ENCODE measurements at regions of chr2 and their contacts with region 1.

Region 1: GRCh38 chr2:239024226-239024625 is 176.3 kb downstream of the TWIST2 start:
- DNase-seq: peak; percentile 45

Region 2: DNA sequence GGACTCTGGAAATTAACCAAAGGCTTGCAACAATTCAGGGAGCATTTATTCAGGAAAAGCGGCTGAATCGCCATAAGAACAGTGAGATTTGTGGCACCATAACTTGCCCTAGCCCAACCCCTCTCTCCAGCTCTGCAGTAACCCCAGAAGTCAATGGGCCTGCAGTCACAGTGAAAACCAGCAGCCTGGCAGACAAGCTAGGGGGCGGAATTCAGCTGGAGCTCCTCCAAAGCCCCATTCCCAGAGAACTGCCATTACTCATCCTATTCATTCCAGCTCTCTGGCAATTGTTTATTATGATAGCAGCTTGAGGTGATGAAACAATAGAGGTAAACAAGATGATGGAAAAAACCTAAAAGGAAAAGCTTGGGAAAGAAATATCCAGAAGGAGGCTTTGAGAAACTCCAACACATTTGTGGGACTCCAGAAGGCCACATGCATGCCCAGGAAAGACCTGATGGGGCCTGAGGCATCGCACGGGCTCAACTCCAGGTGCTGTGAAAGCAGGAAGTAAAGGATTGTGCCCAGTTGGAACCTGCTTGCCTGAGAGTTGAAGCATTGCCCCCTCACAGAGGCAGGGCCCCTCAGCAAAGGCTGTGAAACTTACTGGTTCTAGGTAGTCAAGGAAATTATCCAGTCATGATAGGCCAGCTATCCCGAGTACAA is 49.6 kb before region 1 on chr2:
- intact Hi-C with region 1: no loop called
- DNase-seq: no peak

Region 3: DNA sequence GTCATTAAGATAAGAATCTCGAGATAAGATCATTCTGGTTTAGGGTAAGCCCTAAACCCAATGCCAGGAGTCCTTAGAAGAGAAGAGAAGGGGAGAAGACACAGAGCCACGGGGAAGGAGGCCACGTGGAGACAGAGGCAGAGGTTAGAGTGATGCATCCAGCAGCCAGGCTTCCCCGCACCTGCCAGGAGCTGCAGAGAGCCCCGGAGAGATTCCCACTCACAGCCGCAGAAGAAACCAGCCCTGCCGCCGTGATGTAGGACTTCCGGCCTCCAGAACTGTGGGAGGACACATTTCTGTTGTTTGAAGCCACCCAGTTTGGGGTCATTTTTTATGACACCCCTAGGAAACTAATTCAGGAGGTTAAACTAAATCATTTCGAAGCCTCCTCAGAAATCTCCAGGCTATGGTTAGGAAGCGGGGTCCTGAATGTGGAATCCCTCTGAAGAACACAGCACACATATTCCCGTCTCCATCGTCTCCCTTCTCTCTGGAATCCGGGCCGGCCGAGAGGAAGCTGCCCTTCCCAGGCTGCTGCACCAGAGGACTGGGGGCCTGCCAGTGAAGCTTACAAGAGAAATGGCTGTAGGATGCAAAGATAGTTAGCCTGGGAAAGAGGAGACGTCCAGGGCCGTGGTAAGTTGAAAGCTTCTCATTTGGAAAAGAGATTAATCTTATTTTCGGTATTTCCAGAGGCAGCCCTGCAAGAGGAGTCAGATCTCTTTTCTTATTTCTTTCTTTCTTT is 19.8 kb before region 1 on chr2:
- intact Hi-C with region 1: loop called in 1 of 2 experiments (anchors 1 kb)
- DNase-seq: no peak

Region 4: GRCh38 chr2:239106314-239106908 is 82.2 kb after region 1 on chr2:
- intact Hi-C with region 1: no loop called
- DNase-seq: no peak

Measured in posterior vena cava (tissue), 2 donors.